Tibial artery (tissue), 4 donors: ENCODE measurements at regions of chr7 and their contacts with region 1.

Region 1: DNA sequence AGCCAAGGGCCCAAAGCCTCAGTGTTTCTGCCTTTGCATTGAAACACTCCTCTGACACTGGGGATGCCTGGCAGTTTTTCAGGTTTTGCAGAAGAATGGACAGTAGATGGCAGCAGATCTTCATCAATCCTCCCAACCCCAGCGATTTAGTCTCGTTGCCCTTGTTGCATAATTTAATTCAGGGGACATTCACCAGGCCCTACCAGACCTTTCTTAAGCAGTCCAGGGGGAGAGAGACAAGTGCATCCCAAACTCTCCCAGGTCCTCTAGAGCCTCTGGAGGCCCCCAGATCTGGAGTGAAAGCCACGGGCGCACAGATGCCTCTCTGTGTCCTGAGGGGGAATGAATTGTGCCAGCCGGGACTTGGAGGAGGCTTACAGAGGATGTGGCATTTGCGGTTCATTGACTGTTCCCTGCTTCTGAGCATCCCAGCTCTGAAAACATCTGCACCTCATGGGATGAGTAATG is 29.6 kb downstream of the MINDY4 start:
- DNase-seq: peak; percentile 74 to 82
- H3K4me3 ChIP-seq: no peak overlapping the region
- H3K27ac ChIP-seq: peak overlapping the region; percentile 56 to 60
- H3K4me1 ChIP-seq: peaks cover 8 to 84% (median 72%) of the 10 kb centered on the region in 4 donors
- H3K27me3 ChIP-seq: no peaks in the 10 kb centered on the region
- CTCF ChIP-seq: peak; percentile 73 to 85

Region 2: DNA sequence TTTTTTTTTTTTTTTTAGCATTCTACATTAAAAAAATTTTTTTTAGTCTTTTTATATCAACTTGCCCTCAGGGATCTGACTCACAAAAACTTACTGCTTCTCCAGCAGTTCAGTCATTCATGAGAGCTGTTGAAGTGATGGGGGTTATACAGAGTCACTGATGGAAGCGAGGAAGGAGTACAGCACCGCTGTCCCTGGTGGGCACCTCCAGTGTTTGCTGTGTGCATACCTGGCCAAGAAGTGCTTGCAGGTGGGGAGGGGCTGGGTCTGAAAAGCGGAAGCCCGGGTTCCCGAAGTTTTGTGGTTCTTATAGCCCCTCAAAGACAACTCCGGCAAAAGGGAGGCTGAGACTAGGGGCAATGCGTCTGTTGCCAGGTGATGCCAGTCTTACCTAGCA is 16.6 kb after region 1 on chr7:
- intact Hi-C with region 1: no loop called
- DNase-seq: no peak
- H3K4me3 ChIP-seq: no peak overlapping the region
- H3K27ac ChIP-seq: peak overlapping the region; percentile 83
- H3K4me1 ChIP-seq: peaks cover 6 to 88% (median 54%) of the 10 kb centered on the region in 4 donors
- H3K27me3 ChIP-seq: no peaks in the 10 kb centered on the region
- CTCF ChIP-seq: peak in 1 of 2 experiments; percentile 9

Region 3: DNA sequence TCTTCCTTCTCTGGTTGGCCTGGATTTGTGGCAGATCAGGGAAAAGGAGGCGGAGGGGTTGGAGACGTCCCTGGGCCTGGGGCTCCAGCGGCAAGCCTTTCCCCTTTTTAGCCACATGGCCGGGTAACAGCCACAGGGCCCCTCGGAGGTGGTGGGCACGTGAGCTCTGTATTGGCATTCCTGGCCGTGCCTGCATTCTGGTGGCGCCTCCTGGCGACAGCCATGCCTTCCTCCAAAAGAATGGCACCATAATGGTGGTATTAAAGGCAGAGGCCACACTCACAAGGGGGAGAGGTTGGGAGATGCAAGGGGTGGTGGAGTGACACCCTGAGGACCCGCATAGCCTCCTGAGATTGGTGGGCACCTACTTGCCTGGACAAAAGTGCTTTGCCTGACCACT is 107.9 kb after region 1 on chr7:
- intact Hi-C with region 1: loop called (anchors 5 kb)
- DNase-seq: no peak
- H3K4me3 ChIP-seq: no peak overlapping the region
- H3K27ac ChIP-seq: peak overlapping the region; percentile 87 to 92
- H3K4me1 ChIP-seq: peaks cover 0 to 93% (median 83%) of the 10 kb centered on the region in 4 donors
- H3K27me3 ChIP-seq: no peaks in the 10 kb centered on the region
- CTCF ChIP-seq: no peak

Region 4: DNA sequence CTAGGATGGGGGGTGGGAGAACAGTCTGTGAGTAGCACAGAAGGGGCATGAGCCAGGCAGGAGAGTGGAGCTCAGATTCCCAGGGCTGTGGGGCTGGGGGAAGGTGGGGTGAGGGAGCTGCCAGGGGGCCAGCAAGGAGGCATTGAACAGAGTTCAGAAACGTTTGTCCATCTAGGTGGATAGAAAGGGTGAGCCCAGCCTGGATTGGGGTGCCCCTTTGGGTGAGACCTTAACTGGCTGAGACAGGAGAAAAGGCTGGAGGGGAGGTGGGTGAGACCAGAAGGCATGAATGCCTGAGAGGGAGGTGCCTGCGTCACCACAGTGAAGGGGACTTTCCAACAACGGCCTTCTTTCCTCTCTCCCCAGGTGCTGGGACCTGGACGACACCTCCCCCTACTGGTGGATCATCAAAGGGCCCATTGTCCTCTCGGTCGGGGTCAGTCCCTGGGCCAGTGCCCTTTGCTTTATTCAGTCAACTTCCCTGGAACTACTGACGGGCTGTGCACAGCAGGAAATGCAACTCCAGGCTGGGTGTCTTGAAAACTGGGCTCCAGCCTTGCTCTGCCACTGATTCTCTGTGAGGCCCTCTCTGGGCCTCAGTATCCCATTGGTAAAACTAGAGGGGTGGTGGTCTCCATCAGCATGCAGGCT is 173.9 kb after region 1 on chr7:
- intact Hi-C with region 1: loop called (anchors 5 kb)
- DNase-seq: no peak
- H3K4me3 ChIP-seq: no peak overlapping the region
- H3K27ac ChIP-seq: no peak overlapping the region
- H3K4me1 ChIP-seq: peaks cover 0 to 9% (median 0%) of the 10 kb centered on the region in 4 donors
- H3K27me3 ChIP-seq: peaks cover 0 to 29% of the 10 kb centered on the region in 2 donors
- CTCF ChIP-seq: peak; percentile 55 to 59

Region 5: GRCh38 chr7:31122649-31123058 is 321.8 kb after region 1 on chr7:
- intact Hi-C with region 1: loop called (anchors 2 kb)
- DNase-seq: peak; percentile 70 to 80
- H3K4me3 ChIP-seq: no peak overlapping the region
- H3K27ac ChIP-seq: no peak overlapping the region
- H3K4me1 ChIP-seq: no peaks in the 10 kb centered on the region
- H3K27me3 ChIP-seq: peaks cover 0 to 7% of the 10 kb centered on the region in 2 donors
- CTCF ChIP-seq: peak; percentile 75 to 76